B cell (primary cell): ENCODE measurements at regions of chr1 and their contacts with region 1.

Region 1: GRCh38 chr1:158998781-158999161 is 10.9 kb upstream of the IFI16 start:
- DNase-seq: peak; percentile 80
- ATAC-seq: peak; percentile 73
- H3K4me3 ChIP-seq: no peak overlapping the region
- H3K4me3 Mint-ChIP-seq: peak overlapping the region; percentile 55
- H3K27ac ChIP-seq: no peak overlapping the region
- H3K27ac Mint-ChIP-seq: no peak overlapping the region
- H3K4me1 ChIP-seq: peaks cover 6 to 12% of the 10 kb centered on the region in 2 donors
- H3K4me1 Mint-ChIP-seq: peaks cover 22% of the 10 kb centered on the region
- H3K27me3 ChIP-seq: no peaks in the 10 kb centered on the region
- H3K27me3 Mint-ChIP-seq: no peaks in the 10 kb centered on the region
- CTCF ChIP-seq: peak; percentile 98

Region 2: DNA sequence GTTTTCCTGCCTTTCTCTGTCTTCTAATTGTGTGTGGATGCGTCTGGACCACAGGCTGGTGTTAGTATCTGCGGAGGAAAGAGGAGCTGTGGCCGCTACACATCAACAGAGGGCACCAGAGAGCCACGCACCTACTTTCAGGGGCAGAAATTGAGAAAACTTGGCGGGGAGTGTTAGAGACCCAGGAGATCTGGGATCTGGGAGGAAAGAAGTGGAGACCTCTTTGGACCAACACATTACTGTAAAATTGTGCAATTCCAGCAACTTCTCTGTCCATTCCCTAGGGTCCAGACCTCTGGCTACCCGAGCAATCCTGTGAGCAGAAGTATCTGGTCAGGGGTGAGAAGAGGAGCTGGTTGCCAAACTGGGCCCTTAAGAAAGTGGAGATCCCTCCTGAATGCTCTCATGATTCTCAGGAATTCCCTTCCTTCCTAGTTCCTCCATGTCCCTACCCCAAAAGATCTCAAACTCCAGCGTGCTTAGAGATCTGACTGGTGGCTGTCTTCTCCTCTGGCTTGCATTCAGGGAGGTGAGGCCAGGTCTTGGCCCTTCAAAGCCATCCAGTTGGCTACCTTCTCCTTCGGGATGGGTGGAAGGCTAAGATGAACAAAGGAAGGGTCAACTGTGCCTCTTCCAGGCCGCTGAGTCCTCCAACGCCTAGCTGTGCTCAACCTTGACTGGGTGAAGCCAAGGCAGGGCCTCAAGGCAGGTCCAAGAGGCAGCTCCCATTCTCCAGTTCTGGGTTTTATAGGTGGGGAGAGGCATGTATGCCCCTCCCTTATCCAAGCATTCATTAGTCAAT is 1006.5 kb before region 1 on chr1:
- CTCF ChIA-PET with region 1: interaction called, 5 read pairs
- POLR2A ChIA-PET with region 1: no interaction called
- intact Hi-C with region 1: loop called (anchors 2 kb)
- DNase-seq: peak; percentile 75
- ATAC-seq: peak; percentile 70
- H3K4me3 ChIP-seq: no peak overlapping the region
- H3K4me3 Mint-ChIP-seq: peak overlapping the region; percentile 86
- H3K27ac ChIP-seq: no peak overlapping the region
- H3K27ac Mint-ChIP-seq: no peak overlapping the region
- H3K4me1 ChIP-seq: peaks cover 16 to 21% of the 10 kb centered on the region in 2 donors
- H3K4me1 Mint-ChIP-seq: peaks cover 19% of the 10 kb centered on the region
- H3K27me3 ChIP-seq: peaks cover 0 to 46% (median 24%) of the 10 kb centered on the region in 4 experiments
- H3K27me3 Mint-ChIP-seq: peaks cover 49% of the 10 kb centered on the region
- CTCF ChIP-seq: peak; percentile 98

Region 3: GRCh38 chr1:158248118-158248517 is 750.7 kb before region 1 on chr1:
- CTCF ChIA-PET with region 1: interaction called, 27 read pairs
- POLR2A ChIA-PET with region 1: interaction called, 3 read pairs
- intact Hi-C with region 1: no loop called
- DNase-seq: peak; percentile 88
- ATAC-seq: peak; percentile 84
- H3K4me3 ChIP-seq: peak overlapping the region in 3 of 5 experiments; percentile 16 to 32 (median 26)
- H3K4me3 Mint-ChIP-seq: peak overlapping the region; percentile 49
- H3K27ac ChIP-seq: peak overlapping the region; percentile 40 to 63
- H3K27ac Mint-ChIP-seq: peak overlapping the region; percentile 57
- H3K4me1 ChIP-seq: peaks cover 49 to 51% of the 10 kb centered on the region in 2 donors
- H3K4me1 Mint-ChIP-seq: peaks cover 48% of the 10 kb centered on the region
- H3K27me3 ChIP-seq: no peaks in the 10 kb centered on the region
- H3K27me3 Mint-ChIP-seq: no peaks in the 10 kb centered on the region
- CTCF ChIP-seq: no peak

Region 4: DNA sequence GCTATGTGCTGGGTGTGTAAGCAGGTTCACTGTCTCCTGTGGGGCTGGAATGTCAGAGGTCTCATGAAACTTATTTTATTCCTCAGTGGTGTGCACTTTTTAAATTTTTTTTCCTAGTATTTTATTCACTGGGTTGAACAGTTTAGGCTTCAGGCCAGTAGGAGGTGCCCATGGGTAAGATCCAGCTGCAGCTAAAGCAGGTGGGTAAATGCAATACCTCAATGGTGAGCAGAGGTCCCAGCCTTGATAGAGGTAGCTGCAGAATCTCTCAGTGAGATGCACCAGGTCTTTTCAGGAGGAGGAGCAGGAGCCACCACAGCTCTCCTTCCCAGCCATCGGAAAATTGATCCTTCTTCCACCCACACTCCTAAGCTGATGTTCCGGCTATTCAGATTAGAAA is 205.2 kb before region 1 on chr1:
- CTCF ChIA-PET with region 1: interaction called, 13 read pairs
- POLR2A ChIA-PET with region 1: no interaction called
- intact Hi-C with region 1: loop called (anchors 1 kb)
- DNase-seq: peak; percentile 42
- ATAC-seq: no peak
- H3K4me3 ChIP-seq: no peak overlapping the region
- H3K4me3 Mint-ChIP-seq: no peak overlapping the region
- H3K27ac ChIP-seq: no peak overlapping the region
- H3K27ac Mint-ChIP-seq: no peak overlapping the region
- H3K4me1 ChIP-seq: no peaks in the 10 kb centered on the region
- H3K4me1 Mint-ChIP-seq: no peaks in the 10 kb centered on the region
- H3K27me3 ChIP-seq: peaks cover 0 to 3% (median 0%) of the 10 kb centered on the region in 4 experiments
- H3K27me3 Mint-ChIP-seq: peaks cover 23% of the 10 kb centered on the region
- CTCF ChIP-seq: peak; percentile 49

Region 5: DNA sequence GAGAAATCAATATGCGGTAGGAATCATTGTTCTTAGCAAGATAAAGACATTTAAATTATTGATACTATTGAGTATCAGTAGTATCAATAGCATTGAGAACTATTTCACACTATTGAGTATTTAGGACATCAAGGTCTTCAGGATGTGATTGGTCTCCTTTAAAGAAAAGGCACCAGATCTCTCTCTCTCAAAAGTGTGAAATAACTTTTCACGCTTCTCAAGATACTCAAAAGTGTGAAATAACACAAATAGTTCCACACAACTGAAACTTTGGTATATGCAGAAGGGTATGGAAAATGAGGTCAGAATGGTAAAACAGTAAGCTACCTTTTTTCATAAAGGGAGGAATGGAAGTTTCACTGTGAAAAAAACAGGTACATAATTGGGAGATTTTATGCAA is 74.1 kb before region 1 on chr1:
- CTCF ChIA-PET with region 1: no interaction called
- POLR2A ChIA-PET with region 1: no interaction called
- intact Hi-C with region 1: no loop called
- DNase-seq: no peak
- ATAC-seq: no peak
- H3K4me3 ChIP-seq: no peak overlapping the region
- H3K4me3 Mint-ChIP-seq: no peak overlapping the region
- H3K27ac ChIP-seq: no peak overlapping the region
- H3K27ac Mint-ChIP-seq: no peak overlapping the region
- H3K4me1 ChIP-seq: no peaks in the 10 kb centered on the region
- H3K4me1 Mint-ChIP-seq: peaks cover under 1% of the 10 kb centered on the region
- H3K27me3 ChIP-seq: no peaks in the 10 kb centered on the region
- H3K27me3 Mint-ChIP-seq: peaks cover 6% of the 10 kb centered on the region
- CTCF ChIP-seq: no peak

Region 6: DNA sequence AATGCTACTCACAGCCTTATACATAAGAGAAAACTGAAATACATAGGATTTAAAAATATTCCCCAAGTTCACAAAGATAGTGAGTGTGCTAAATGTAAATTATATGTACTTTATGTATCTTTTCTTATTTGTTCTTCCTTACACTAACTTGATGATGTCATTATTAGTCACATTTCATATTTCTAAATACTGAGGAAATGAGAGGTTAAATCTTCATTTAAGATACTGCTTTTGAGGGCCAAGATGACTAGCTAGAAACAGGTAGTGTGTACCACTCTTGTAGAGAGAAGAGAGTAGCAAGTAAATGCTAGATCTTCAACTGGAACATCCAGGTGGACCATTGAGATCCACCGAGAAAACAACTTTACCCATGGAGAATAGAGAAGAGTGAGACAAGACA is 37.6 kb before region 1 on chr1:
- CTCF ChIA-PET with region 1: no interaction called
- POLR2A ChIA-PET with region 1: no interaction called
- intact Hi-C with region 1: no loop called
- DNase-seq: no peak
- ATAC-seq: no peak
- H3K4me3 ChIP-seq: no peak overlapping the region
- H3K4me3 Mint-ChIP-seq: no peak overlapping the region
- H3K27ac ChIP-seq: no peak overlapping the region
- H3K27ac Mint-ChIP-seq: no peak overlapping the region
- H3K4me1 ChIP-seq: no peaks in the 10 kb centered on the region
- H3K4me1 Mint-ChIP-seq: no peaks in the 10 kb centered on the region
- H3K27me3 ChIP-seq: peaks cover 0 to 3% (median 0%) of the 10 kb centered on the region in 4 experiments
- H3K27me3 Mint-ChIP-seq: peaks cover 12% of the 10 kb centered on the region
- CTCF ChIP-seq: no peak

Region 7: DNA sequence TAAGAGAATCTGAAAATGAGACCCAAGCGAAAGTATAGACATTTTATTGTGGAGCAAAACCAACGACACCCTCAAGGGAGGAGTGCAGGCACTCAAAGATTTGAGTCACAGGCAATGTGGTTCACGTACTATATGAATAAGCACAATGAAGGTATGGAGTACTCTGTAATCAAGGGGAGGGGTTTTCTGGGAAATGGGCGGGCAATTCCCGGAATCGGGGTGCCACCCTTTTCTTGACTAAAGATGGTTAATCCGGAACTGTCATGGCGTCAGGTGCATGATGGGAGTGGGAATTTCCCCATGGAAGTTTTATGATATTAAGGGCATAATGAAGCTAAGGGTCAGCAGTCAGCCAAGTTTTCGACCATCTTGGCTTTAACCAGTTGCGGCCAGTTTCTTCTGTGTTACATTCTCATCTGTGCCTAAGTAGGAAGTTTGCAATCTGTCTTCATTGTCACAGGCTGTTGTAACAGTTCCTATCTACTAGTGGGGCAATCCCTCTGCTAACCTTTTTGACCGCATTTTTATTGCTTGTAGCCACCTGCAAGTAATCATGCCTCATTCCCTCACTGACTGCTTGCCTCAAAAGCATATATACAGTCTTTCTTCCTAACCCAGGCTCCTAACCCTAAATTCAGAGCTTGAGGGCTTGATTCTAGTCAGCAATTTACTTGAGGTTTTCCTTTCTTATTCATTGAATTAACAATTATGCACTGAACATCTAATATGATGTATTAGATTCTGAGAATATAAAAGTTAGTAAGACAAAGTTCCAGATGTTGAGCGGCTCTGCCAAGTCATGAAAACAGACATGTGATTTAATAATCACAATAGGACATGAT is 78.6 kb after region 1 on chr1:
- CTCF ChIA-PET with region 1: interaction called, 19 read pairs
- POLR2A ChIA-PET with region 1: no interaction called
- intact Hi-C with region 1: loop called (anchors 1 kb)
- DNase-seq: peak; percentile 83
- ATAC-seq: peak; percentile 61
- H3K4me3 ChIP-seq: peak overlapping the region in 4 of 5 experiments; percentile 54 to 80 (median 60)
- H3K4me3 Mint-ChIP-seq: peak overlapping the region; percentile 89
- H3K27ac ChIP-seq: peak overlapping the region; percentile 76 to 80
- H3K27ac Mint-ChIP-seq: peak overlapping the region; percentile 96
- H3K4me1 ChIP-seq: peaks cover 13 to 24% of the 10 kb centered on the region in 2 donors
- H3K4me1 Mint-ChIP-seq: peaks cover 28% of the 10 kb centered on the region
- H3K27me3 ChIP-seq: no peaks in the 10 kb centered on the region
- H3K27me3 Mint-ChIP-seq: no peaks in the 10 kb centered on the region
- CTCF ChIP-seq: no peak